ENCODE measurements at regions of chr15 and their contacts with region 1.

Region 1: DNA sequence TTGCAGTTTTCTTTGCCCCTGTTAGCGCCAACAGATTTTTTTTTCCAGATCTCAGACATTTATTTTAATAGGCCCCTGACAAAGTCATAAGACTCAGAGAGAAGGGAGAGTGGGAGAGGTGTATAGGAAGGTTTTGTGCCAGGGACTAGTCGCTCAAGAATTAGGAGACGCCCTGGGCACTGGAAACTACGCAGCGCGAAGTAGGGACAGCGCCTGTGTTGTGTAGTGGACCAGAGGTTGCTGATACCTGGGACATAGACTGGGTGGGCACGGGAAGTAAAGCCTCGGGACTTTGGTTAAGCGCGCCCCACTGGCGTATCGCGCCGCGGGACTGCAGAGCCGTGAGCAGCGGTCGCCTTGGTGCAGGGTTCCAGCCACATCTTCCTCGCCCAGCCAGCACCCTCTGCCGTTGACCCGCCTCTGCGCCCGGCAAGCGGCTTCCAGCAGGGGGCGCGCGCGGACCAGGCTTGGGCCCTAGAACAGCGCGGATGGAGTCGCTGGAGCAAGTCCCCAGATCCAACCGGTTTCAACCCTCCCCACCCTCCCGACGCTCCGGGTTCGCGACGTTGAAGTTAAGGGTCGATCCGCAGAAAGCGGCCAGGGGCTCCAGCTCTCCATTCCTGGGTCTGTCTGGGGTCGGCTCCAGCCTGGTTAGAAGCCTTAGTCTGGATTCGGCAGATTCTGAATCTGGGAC is 3.0 kb upstream of the ISLR2 start:
- DNase-seq: peak; percentile 93 to 96 (median 95)
- H3K4me3 ChIP-seq: peak overlapping the region; percentile 36 to 53 (median 40)
- H3K27ac ChIP-seq: no peak overlapping the region
- H3K4me1 ChIP-seq: peaks cover 0 to 13% (median 0%) of the 10 kb centered on the region in 3 donors
- H3K27me3 ChIP-seq: peaks cover 32% of the 10 kb centered on the region
- CTCF ChIP-seq: peak; percentile 100

Region 2: DNA sequence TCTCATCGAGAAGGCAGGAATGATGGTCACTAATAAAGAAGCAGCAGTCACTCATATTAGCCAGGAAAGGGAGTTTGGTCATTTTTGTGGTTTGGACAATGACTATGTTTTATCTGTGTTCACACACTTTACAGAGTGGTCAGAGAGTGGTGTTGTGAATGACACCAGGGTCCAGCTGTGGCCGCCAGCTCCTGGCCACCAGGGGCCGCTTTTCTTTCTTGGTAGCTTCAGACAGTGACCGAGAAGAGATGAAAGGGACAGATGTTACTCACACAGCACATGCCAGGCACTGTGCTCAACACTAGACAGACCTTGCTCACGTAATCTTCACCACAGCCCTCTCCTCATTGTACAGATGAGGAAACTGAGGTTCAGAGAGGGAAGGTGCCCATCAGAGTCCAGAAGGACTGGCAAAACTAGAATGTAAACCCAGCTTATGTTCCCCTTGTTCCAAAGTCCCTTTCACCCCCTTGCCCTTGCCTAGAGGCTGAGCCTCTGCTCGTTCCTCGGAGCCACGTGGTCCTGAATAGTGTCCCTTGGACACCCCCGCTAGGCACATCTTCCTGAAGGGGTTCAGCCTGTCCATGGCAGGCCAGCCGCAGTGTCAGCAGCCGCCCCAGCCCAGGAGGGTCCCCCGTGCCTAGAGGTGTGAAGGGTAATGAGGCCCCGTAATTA is 184.5 kb after region 1 on chr15:
- intact Hi-C with region 1: loop called (anchors 5 kb)
- DNase-seq: peak in 1 of 5 donors; percentile 42
- H3K4me3 ChIP-seq: no peak overlapping the region
- H3K27ac ChIP-seq: no peak overlapping the region
- H3K4me1 ChIP-seq: peaks cover 0 to 2% (median 0%) of the 10 kb centered on the region in 3 donors
- H3K27me3 ChIP-seq: no peaks in the 10 kb centered on the region
- CTCF ChIP-seq: peak; percentile 33

Region 3: GRCh38 chr15:74322181-74323076 is 195.0 kb after region 1 on chr15:
- intact Hi-C with region 1: loop called (anchors 5 kb)
- DNase-seq: peak; percentile 68 to 88 (median 80)
- H3K4me3 ChIP-seq: no peak overlapping the region
- H3K27ac ChIP-seq: no peak overlapping the region
- H3K4me1 ChIP-seq: no peaks in the 10 kb centered on the region
- H3K27me3 ChIP-seq: no peaks in the 10 kb centered on the region
- CTCF ChIP-seq: peak; percentile 86

Measured in kidney (tissue), 22 donors.